Mammary epithelial cell (primary cell): ENCODE measurements at regions of chr2 and their contacts with region 1.

Region 1: DNA sequence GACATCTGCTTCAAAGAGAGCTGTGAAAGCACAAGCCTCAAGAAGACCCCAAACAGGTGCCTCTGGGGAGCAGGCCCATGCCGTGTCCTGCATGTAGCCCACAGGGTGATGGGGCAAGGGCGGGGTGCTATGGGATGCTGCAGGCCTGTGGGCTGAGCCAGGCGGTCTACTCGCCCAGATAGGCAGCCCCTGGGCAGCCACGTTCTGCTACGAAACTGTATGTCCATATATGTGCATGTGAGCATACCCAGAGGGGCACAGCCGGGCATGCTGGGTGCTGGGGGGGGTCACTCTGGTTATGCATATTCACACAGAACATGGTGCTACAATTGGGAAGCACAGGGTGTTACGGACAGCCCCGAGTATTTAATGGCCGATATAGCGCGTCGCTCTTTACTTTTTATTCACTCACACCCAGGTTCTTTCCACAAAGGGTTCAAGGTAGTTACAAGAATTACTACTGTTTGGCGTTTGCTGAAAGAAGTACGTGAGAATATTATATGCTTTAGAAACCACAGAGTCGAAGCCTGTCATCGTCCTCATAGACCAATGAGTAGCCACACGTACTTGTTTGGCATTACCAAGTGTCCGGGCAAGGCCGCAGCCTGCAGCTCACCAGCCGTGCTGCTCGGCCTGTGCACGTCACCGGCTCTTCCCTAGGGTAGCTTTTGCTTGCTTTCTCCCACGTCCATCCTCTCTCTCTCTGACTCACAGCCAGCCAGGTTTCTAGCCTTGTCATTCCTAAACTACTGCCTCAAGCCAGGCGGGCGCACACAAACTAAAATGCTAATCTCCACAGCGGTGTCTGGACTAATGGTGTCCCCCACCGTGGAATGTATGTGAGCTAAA is 14.4 kb downstream of the MTERF4 start:
- DNase-seq: no peak
- H3K4me3 ChIP-seq: no peak overlapping the region
- H3K27ac ChIP-seq: no peak overlapping the region
- H3K4me1 ChIP-seq: no peaks in the 10 kb centered on the region
- H3K27me3 ChIP-seq: no peaks in the 10 kb centered on the region
- CTCF ChIP-seq: no peak

Region 2: DNA sequence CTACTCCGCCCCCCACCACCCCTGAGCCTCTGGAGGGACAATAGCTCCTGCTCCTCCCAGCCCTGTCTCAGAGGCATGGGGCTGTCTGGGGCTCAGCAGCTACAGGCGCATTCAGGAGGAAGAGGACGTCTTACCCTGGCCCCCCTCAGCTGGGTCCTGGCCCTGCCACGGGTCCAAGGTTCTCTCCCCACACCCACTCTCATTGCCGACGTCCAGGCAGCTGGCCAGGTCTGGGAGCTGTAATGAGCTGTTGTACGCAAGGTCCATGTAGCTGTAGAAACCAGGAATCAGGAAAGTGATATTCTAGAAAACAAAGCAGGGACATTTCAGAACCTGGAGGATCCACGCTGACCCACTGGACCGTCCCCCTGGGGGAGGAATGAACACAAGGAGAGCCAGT is 48.1 kb after region 1 on chr2:
- CTCF ChIA-PET with region 1: no interaction called
- dilution Hi-C with region 1: loop called (anchors 10 kb)
- in situ Hi-C with region 1: no loop called
- intact Hi-C with region 1: no loop called
- DNase-seq: no peak
- H3K4me3 ChIP-seq: no peak overlapping the region
- H3K27ac ChIP-seq: no peak overlapping the region
- H3K4me1 ChIP-seq: no peaks in the 10 kb centered on the region
- H3K27me3 ChIP-seq: no peaks in the 10 kb centered on the region
- CTCF ChIP-seq: no peak